ENCODE measurements at regions of chr4 and their contacts with region 1.

Region 1: DNA sequence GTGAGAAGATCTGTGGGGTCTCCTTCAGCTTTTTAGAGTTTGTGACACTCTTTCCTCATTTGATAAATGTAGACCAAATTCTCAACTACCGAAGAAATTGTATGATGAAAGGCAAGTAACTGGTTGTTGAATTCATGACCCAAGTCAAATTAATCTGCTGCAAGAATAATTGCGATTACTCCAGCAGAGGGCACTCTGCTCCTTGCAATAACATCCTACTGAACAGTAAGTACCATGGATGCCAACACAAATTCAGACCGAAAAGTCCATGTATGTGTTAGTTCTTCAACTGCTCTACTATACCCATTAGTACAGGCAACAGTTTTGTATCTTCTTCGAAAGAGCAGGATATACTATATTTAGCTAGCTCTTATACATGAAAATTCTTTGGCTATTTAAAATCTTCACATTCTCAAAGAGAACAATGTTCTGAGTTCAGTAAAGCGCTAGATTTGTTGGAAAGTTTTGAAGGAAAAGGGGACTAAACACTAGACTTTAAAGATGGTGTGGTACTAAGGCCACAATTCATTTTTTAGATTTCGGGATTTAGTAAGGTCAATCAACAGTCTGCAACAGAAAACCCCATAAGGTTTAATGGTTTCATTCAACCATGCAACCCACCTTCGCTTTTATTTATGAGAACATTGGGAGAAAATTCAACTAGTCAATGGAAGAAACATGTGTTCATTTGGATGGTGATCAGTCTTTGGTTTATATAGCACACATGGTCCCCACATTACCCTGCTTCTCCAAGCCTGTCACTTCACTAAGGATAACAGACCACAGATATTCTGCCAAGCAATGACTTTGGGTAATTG is 105.4 kb upstream of the TBC1D9 start:
- H3K4me3 ChIP-seq: no peak overlapping the region
- H3K27ac ChIP-seq: no peak overlapping the region
- H3K4me1 ChIP-seq: peaks cover 8% of the 10 kb centered on the region
- CTCF ChIP-seq: peak; percentile 55

Region 2: DNA sequence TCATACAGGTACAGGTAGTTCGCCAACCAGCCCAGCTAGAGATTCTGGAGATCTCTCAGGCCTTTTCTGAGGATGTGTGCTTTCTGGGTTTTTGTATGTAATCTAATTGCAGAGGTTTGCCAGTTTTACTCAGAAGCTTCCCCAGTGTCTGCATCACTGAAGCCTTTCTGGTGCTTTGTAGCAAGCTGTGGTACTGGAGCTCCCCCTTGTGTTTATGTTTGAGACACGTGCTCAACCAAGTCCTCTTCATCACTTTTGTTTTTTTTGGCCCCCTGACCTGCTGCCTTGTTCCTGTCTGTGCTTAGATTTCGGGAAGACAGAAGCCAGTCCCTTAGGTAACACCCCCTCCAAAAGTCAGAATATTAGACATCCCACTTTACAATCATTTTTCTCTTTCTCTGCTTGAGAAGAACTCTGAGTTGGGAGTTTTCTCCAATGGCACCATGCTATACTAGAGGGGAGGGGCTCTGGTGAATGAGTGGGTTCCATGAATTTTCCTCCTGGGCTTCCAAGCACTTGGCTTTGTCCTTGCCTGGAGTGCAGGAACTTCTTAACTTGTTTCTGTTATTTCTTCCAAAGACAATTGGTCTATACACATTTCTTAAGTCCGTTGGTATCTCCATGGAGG is 23.0 kb after region 1 on chr4:
- CTCF ChIA-PET with region 1: interaction called, 63 read pairs
- POLR2A ChIA-PET with region 1: no interaction called
- H3K4me3 ChIP-seq: no peak overlapping the region
- H3K27ac ChIP-seq: no peak overlapping the region
- H3K4me1 ChIP-seq: no peaks in the 10 kb centered on the region
- CTCF ChIP-seq: peak; percentile 71; the same call in 1 of the 2 replicates

Region 3: DNA sequence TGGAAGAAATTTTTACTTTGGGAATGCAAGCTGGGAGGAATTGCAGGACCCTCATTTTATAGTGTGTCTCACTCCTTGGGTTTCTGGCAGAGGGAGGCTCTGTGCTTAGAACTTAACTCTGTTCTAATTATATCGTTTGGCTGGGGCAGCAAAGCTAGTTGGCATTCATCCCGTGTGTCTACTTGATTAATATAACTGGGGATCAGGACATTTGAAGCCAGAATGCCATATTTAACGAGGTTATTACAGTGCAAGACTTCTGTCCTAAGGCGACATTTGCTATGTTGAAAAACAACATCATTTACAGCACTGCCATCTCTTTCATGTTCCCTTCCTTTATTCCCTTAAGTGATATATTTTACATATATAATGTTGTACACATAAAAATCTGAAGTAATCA is 73.7 kb after region 1 on chr4:
- CTCF ChIA-PET with region 1: no interaction called
- POLR2A ChIA-PET with region 1: no interaction called
- H3K4me3 ChIP-seq: no peak overlapping the region
- H3K27ac ChIP-seq: no peak overlapping the region
- H3K4me1 ChIP-seq: peaks cover 5% of the 10 kb centered on the region; the same call in 1 of the 2 replicates
- CTCF ChIP-seq: no peak